PC-3 (cell line): ENCODE measurements at regions of chr19 and their contacts with region 1.

Region 1: DNA sequence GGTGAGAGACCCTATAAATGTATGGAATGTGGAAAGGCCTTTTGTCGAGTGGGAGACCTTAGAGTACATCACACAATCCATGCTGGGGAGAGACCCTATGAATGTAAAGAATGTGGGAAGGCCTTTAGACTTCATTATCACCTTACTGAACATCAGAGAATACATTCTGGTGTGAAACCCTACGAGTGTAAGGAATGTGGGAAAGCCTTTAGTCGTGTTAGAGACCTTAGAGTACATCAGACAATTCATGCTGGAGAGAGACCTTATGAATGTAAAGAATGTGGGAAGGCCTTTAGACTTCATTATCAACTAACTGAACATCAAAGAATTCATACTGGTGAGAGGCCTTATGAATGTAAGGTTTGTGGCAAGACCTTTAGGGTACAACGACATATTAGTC is 17.1 kb downstream of the ZNF546 start:
- DNase-seq: no peak
- ATAC-seq: no peak
- H3K4me3 ChIP-seq: no peak overlapping the region
- H3K27ac ChIP-seq: no peak overlapping the region
- H3K4me1 ChIP-seq: no peaks in the 10 kb centered on the region
- H3K27me3 ChIP-seq: no peaks in the 10 kb centered on the region
- CTCF ChIP-seq: no peak

Region 2: GRCh38 chr19:39810424-39810823 is 203.6 kb before region 1 on chr19:
- CTCF ChIA-PET with region 1: no interaction called
- POLR2A ChIA-PET with region 1: interaction called, 17 read pairs
- intact Hi-C with region 1: no loop called
- DNase-seq: no peak
- ATAC-seq: no peak
- H3K4me3 ChIP-seq: no peak overlapping the region
- H3K27ac ChIP-seq: no peak overlapping the region
- H3K4me1 ChIP-seq: no peaks in the 10 kb centered on the region
- H3K27me3 ChIP-seq: no peaks in the 10 kb centered on the region
- CTCF ChIP-seq: no peak

Region 3: DNA sequence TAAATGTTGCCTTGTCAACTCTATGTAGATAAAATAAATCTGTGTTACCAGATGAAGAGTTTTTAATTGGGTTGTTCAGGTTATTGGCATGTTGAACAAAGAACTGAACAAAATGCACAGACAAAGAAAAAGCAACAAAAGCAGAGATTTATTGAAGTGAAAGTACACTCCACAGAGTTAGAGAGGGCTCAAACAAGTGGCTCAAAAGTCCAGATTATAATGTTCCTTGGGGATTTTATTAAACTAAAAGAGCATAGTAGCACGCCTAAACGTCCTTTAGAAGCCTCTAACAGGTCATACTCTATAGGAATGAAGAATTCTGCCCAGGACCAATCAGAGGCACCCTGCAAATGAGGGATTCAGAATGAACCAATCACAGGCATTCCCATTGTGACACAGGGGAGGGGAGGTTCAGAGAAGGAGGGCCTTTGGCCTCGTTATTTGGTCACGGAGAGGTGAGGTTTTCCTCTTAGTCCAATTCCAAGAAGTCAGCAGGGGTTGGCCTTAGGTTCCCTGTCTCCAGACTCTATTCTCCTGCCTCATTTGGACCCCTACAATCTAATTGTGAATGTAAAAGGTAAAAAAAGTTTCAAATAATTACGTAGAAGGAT is 30.2 kb before region 1 on chr19:
- CTCF ChIA-PET with region 1: no interaction called
- POLR2A ChIA-PET with region 1: no interaction called
- intact Hi-C with region 1: no loop called
- DNase-seq: no peak
- ATAC-seq: no peak
- H3K4me3 ChIP-seq: no peak overlapping the region
- H3K27ac ChIP-seq: no peak overlapping the region
- H3K4me1 ChIP-seq: no peaks in the 10 kb centered on the region
- H3K27me3 ChIP-seq: no peaks in the 10 kb centered on the region
- CTCF ChIP-seq: no peak